H1 (cell line): ENCODE measurements at regions of chr1 and their contacts with region 1.

Region 1: DNA sequence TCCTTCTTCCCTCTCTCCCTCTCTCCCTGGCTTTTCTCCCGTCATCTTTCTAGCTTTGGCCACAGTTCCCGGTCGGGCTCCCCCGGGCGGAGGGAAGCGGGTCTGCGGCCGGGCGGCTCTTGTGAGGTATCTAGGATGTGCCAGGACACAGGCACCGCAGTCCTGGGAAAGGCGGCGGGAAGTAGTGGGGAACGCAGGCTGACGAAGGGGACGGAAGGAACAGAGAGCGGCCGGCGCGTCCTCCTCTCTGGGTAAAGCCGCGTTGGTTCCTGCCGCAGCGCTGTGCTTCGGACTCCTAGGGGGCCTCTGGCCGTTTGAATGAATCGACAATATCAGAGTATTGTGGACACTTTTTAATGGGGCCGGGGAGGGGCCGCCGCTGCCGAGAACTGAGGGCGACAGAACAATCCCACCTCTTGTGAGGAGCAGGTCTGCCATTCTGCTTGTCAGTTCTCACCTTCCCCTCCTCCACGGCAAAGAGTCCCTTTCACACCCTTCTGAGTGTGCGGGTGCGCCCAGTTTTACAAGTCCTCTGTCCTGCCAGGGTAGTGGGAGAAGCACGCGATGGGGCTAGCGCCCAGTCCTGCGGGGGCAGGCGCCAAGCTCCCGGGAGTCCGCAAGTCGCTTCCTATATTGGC is 1.2 kb upstream of the LHX9 start:
- DNase-seq: peak in 1 of 2 experiments; percentile 83
- H3K4me3 ChIP-seq: peak overlapping the region; percentile 3 to 55 (median 31); a peak in 6 of 8 replicates
- H3K27ac ChIP-seq: no peak overlapping the region
- H3K4me1 ChIP-seq: peaks cover 15 to 58% (median 32%) of the 10 kb centered on the region in 4 experiments
- H3K27me3 ChIP-seq: peaks cover 98 to 100% (median 99%) of the 10 kb centered on the region in 4 experiments
- CTCF ChIP-seq: peak; percentile 57 to 69 (median 57)
- EP300 ChIP-seq: no peak
- POLR2A ChIP-seq: no peak
- RAD21 ChIP-seq: peak; percentile 52 to 61

Region 2: GRCh38 chr1:197526736-197527371 is 389.1 kb before region 1 on chr1:
- CTCF ChIA-PET with region 1: interaction called, 15 read pairs
- POLR2A ChIA-PET with region 1: interaction called, 3 read pairs
- DNase-seq: no peak
- H3K4me3 ChIP-seq: no peak overlapping the region
- H3K27ac ChIP-seq: no peak overlapping the region
- H3K4me1 ChIP-seq: no peaks in the 10 kb centered on the region
- H3K27me3 ChIP-seq: no peaks in the 10 kb centered on the region
- CTCF ChIP-seq: peak in 1 of 3 experiments; percentile 3; a peak in 1 of 4 replicates
- EP300 ChIP-seq: no peak
- POLR2A ChIP-seq: no peak
- RAD21 ChIP-seq: peak in 1 of 2 experiments; percentile 48; a peak in 3 of 4 replicates

Region 3: DNA sequence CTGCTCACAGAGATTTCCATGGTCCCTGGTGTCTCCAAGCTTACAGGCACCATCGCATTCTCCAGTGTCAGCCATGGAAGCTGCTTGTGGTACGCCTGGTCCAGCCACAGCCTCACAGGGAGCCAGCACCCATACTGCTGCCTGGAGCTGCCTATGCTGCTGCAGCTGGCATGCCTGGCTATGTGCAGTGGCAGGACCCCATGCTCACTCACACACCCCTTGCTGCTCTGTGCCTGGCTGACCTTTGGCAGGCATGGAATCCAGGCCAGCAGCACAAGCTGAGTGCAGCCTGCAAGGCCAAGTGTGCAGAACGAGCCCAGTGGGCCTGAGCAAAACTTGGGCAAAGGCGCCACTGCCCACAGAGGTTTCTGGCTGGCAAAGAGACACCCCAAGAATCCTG is 114.3 kb before region 1 on chr1:
- CTCF ChIA-PET with region 1: no interaction called
- POLR2A ChIA-PET with region 1: no interaction called
- DNase-seq: no peak
- H3K4me3 ChIP-seq: no peak overlapping the region; a peak in 1 of 8 replicates
- H3K27ac ChIP-seq: no peak overlapping the region
- H3K4me1 ChIP-seq: peaks cover 0 to 4% (median 0%) of the 10 kb centered on the region in 4 experiments; a peak in 2 of 7 replicates
- H3K27me3 ChIP-seq: no peaks in the 10 kb centered on the region
- CTCF ChIP-seq: no peak
- EP300 ChIP-seq: no peak
- POLR2A ChIP-seq: no peak
- RAD21 ChIP-seq: no peak

Region 4: DNA sequence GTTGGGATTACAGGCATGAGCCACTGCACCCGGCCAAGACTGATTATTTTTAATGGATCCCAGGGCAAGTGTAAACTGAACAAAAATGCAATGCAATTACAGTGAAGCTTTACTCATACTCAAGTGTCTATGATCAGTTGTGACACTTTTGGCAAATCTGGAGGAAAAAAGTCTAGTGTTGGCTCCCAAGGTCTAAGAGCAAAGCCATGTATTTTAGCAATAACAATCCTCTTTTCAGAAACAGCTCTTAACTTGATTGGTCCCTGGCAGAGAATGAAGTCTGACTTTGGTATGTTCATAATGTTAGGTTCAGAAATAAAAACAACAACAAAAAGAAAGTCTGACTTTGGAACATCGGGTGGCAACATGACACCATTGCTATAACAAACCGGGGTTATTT is 53.8 kb before region 1 on chr1:
- CTCF ChIA-PET with region 1: no interaction called
- POLR2A ChIA-PET with region 1: no interaction called
- DNase-seq: no peak
- H3K4me3 ChIP-seq: no peak overlapping the region
- H3K27ac ChIP-seq: no peak overlapping the region
- H3K4me1 ChIP-seq: peaks cover 0 to 2% (median 0%) of the 10 kb centered on the region in 4 experiments; a peak in 1 of 7 replicates
- H3K27me3 ChIP-seq: no peaks in the 10 kb centered on the region
- CTCF ChIP-seq: no peak
- EP300 ChIP-seq: no peak
- POLR2A ChIP-seq: no peak
- RAD21 ChIP-seq: no peak

Region 5: DNA sequence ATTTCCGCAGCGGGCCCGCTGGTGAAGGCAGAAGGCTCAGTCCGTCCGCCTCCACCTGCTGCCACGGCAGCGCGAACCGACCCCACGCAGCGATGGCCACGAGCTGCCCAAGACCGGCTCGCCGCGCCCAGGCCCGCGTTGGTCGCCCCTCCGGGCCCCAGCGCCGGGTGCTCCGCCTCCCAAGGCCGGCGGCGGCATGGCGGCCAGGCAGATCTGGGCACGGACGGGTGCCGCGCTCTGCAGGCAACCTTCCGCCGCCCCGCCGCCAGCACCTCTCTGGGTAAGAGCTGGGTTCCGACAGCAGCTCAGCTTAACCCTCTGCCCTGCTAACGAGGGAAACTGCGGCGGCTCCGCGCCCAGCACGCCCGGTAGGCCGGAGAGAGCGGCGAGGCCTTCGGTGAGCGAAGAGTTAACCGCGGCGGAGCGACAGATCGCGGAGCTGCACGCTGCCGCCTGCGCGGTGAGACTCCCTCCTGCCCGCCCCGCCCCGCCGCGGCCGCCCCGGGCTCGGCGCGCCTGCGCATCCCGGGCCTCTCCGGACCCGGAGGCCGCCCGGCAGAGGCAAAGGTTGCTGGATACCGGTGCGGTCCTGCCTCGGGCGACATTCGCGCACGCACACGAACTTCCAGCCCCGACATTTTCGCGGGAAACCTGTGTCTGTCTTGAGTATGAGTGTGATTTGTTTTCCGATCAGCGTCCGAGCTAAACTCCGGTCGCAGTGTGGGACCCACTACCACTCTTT is 13.4 kb before region 1 on chr1 and contains the start of gene C1orf53:
- CTCF ChIA-PET with region 1: interaction called, 112 read pairs
- POLR2A ChIA-PET with region 1: interaction called, 27 read pairs
- DNase-seq: peak in 1 of 2 experiments; percentile 91
- H3K4me3 ChIP-seq: peak within 1 kb of the TSS; percentile 48 to 76 (median 61)
- H3K27ac ChIP-seq: peak within 1 kb of the TSS; percentile 73; the same call in 1 of the 2 replicates
- H3K4me1 ChIP-seq: peaks cover 0 to 3% (median 2%) of the 10 kb centered on the region in 4 experiments; a peak in 3 of 7 replicates
- H3K27me3 ChIP-seq: peaks cover 32 to 48% (median 42%) of the 10 kb centered on the region in 4 experiments
- CTCF ChIP-seq: no peak
- EP300 ChIP-seq: no peak
- POLR2A ChIP-seq: peak in 1 of 2 experiments; percentile 74; a peak in 2 of 3 replicates
- RAD21 ChIP-seq: peak in 1 of 2 experiments; percentile 0; a peak in 1 of 4 replicates
- total RNA-seq, gene C1orf53: 0.56 and 0.80 TPM in 2 replicates

Region 6: DNA sequence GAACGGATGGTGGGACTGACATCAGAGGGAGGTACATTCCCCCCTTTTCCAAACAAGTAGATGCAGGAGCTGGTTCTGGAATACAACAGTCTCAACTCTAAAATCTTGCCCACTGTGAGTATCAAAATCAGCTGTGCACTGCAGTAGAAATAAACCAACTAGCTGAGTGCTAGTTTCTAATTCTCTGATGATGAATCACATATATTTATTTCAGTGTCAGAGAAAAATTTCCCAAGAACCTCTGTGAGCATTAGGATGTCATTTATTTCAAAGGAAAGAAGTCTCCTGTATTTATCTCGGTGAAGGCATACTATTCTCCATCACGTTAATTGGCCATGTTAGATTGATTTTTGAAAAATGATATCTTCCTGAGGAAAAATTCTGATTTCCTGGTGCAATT is 68.3 kb after region 1 on chr1:
- CTCF ChIA-PET with region 1: no interaction called
- POLR2A ChIA-PET with region 1: no interaction called
- DNase-seq: no peak
- H3K4me3 ChIP-seq: no peak overlapping the region
- H3K27ac ChIP-seq: no peak overlapping the region
- H3K4me1 ChIP-seq: no peaks in the 10 kb centered on the region
- H3K27me3 ChIP-seq: no peaks in the 10 kb centered on the region
- CTCF ChIP-seq: no peak
- EP300 ChIP-seq: no peak
- POLR2A ChIP-seq: no peak
- RAD21 ChIP-seq: no peak